Psoas muscle (tissue), 8 donors: ENCODE measurements at regions of chr7 and their contacts with region 1.

Region 1: DNA sequence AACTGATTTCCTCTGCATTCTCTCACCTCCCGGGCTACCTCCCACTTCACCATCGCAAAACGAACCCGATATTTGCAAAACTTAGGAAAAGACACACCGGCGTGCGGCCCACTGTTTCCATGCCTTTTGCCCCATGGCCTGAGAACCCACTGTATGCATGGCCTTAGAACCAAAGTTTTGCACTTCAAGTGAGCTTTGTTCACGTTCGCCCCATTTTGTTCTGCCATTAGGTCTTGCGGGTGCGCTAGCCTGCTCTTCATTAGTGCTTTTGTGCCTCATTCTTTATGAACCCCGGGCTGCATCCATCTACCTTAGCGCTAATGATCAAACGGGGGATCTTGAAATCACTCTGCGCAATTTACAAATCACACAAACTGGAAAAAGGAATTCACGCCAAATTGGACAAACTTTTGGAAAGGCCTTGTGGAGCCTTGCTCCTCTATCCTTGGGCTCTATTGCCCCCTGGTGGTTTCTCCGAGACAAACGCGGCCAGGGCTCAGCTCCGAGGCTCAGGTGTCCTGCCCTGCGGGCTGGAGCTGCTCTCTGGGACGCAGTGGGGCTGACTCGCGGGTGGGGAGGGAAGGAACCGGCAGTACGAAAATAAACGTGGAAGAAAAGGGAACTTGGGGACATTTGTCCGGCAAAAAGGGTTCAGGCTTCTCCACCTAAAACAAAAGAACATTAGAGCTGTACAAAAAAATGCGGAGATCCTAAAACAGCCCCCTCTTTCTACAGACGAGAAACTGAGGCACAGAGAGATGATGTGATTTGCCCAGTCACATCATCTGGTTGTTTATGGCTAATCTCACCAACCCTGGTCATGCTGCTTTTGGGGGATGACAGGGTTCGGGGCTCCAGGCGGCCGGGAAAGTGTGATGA is 300.4 kb upstream of the NFE2L3 start:
- DNase-seq: peak; percentile 79 to 91
- ATAC-seq: peak; percentile 67 to 74 (median 67)
- H3K4me3 ChIP-seq: peak overlapping the region; percentile 33
- H3K27ac ChIP-seq: peak overlapping the region; percentile 97
- H3K4me1 ChIP-seq: peaks cover 63% of the 10 kb centered on the region
- H3K27me3 ChIP-seq: no peaks in the 10 kb centered on the region
- CTCF ChIP-seq: peak; percentile 89

Region 2: GRCh38 chr7:25259587-25260243 is 591.9 kb before region 1 on chr7:
- intact Hi-C with region 1: loop called (anchors 2 kb)
- DNase-seq: peak; percentile 32 to 56
- ATAC-seq: peak; percentile 83 to 96 (median 88)
- H3K4me3 ChIP-seq: no peak overlapping the region
- H3K27ac ChIP-seq: no peak overlapping the region
- H3K4me1 ChIP-seq: peaks cover 3% of the 10 kb centered on the region
- H3K27me3 ChIP-seq: no peaks in the 10 kb centered on the region
- CTCF ChIP-seq: peak; percentile 79

Region 3: GRCh38 chr7:25288556-25289307 is 562.8 kb before region 1 on chr7:
- intact Hi-C with region 1: no loop called
- DNase-seq: no peak
- ATAC-seq: no peak
- H3K4me3 ChIP-seq: no peak overlapping the region
- H3K27ac ChIP-seq: no peak overlapping the region
- H3K4me1 ChIP-seq: no peaks in the 10 kb centered on the region
- H3K27me3 ChIP-seq: no peaks in the 10 kb centered on the region
- CTCF ChIP-seq: no peak

Region 4: GRCh38 chr7:25565949-25566348 is 285.6 kb before region 1 on chr7:
- intact Hi-C with region 1: loop called (anchors 2 kb)
- DNase-seq: peak; percentile 17 to 64
- ATAC-seq: peak in 3 of 4 donors; percentile 64 to 80 (median 70)
- H3K4me3 ChIP-seq: peak overlapping the region; percentile 22
- H3K27ac ChIP-seq: no peak overlapping the region
- H3K4me1 ChIP-seq: peaks cover 18% of the 10 kb centered on the region
- H3K27me3 ChIP-seq: no peaks in the 10 kb centered on the region
- CTCF ChIP-seq: peak; percentile 100

Region 5: GRCh38 chr7:25578991-25579777 is 272.4 kb before region 1 on chr7:
- intact Hi-C with region 1: no loop called
- DNase-seq: no peak
- ATAC-seq: no peak
- H3K4me3 ChIP-seq: no peak overlapping the region
- H3K27ac ChIP-seq: no peak overlapping the region
- H3K4me1 ChIP-seq: peaks cover 3% of the 10 kb centered on the region
- H3K27me3 ChIP-seq: peaks cover 0 to 2% (median 2%) of the 10 kb centered on the region in 3 donors
- CTCF ChIP-seq: no peak

Region 6: DNA sequence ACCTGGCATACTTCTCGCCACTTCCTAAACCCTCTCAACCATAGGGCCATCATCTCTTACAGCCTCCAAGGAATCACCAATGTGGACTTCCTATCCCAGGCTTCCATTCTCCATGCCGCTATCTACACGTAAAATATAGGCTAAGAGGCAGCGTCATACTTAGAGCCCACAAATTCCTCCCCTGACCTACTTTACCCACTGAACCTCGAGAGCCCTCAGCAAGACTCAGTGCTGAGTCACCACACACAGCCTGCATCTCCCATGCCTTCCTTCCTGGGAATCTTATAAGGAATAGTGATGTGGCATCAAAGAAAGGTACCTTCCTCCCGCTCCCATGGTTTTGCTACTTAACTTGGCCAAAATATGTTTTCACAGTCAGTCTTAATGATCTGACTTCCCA is 135.2 kb before region 1 on chr7:
- intact Hi-C with region 1: loop called (anchors 5 kb)
- DNase-seq: no peak
- ATAC-seq: peak; percentile 47 to 62 (median 56)
- H3K4me3 ChIP-seq: no peak overlapping the region
- H3K27ac ChIP-seq: no peak overlapping the region
- H3K4me1 ChIP-seq: peaks cover 40% of the 10 kb centered on the region
- H3K27me3 ChIP-seq: no peaks in the 10 kb centered on the region
- CTCF ChIP-seq: no peak

Region 7: GRCh38 chr7:25777969-25778708 is 73.4 kb before region 1 on chr7:
- intact Hi-C with region 1: loop called in 1 of 2 experiments (anchors 5 kb)
- DNase-seq: peak in 1 of 2 donors; percentile 61
- ATAC-seq: peak; percentile 34 to 90 (median 67)
- H3K4me3 ChIP-seq: peak overlapping the region; percentile 10
- H3K27ac ChIP-seq: peak overlapping the region; percentile 75
- H3K4me1 ChIP-seq: peaks cover 39% of the 10 kb centered on the region
- H3K27me3 ChIP-seq: no peaks in the 10 kb centered on the region
- CTCF ChIP-seq: no peak

Region 8: DNA sequence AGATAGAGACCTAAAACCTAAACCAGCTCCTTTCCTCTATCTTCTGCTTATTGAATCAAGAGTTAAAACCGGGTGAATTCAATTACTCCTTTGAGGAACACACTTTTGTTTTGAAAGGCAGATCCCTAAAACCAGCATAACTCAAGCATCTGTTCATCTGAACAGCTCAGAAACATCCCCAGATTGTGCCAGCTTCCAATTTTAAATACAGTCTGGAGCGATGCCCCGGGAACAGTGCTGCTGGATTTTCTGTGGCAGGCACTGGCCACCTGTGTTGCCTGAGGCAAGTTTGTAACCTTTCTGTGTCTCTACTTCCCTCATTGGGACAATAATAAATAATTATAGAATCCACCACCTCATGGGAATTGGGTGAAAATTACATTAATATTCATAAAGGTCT is 19.0 kb after region 1 on chr7:
- intact Hi-C with region 1: no loop called
- DNase-seq: no peak
- ATAC-seq: no peak
- H3K4me3 ChIP-seq: no peak overlapping the region
- H3K27ac ChIP-seq: no peak overlapping the region
- H3K4me1 ChIP-seq: no peaks in the 10 kb centered on the region
- H3K27me3 ChIP-seq: peaks cover 4 to 35% (median 6%) of the 10 kb centered on the region in 3 donors
- CTCF ChIP-seq: no peak

Region 9: GRCh38 chr7:25894902-25895791 is 43.6 kb after region 1 on chr7:
- intact Hi-C with region 1: no loop called
- DNase-seq: peak; percentile 74 to 84
- ATAC-seq: peak; percentile 50 to 85 (median 76)
- H3K4me3 ChIP-seq: peak overlapping the region; percentile 56
- H3K27ac ChIP-seq: no peak overlapping the region
- H3K4me1 ChIP-seq: peaks cover 13% of the 10 kb centered on the region
- H3K27me3 ChIP-seq: no peaks in the 10 kb centered on the region
- CTCF ChIP-seq: peak; percentile 66